ENCODE measurements at regions of chr12 and their contacts with region 1.

Region 1: GRCh38 chr12:71602745-71603577 is 60.7 kb downstream of the ZFC3H1 start:
- DNase-seq: no peak
- H3K4me3 ChIP-seq: no peak overlapping the region
- H3K27ac ChIP-seq: no peak overlapping the region
- H3K4me1 ChIP-seq: no peaks in the 10 kb centered on the region
- H3K27me3 ChIP-seq: no peaks in the 10 kb centered on the region
- CTCF ChIP-seq: no peak

Region 2: GRCh38 chr12:71645268-71645667 is 42.3 kb after region 1 on chr12:
- CTCF ChIA-PET with region 1: no interaction called
- dilution Hi-C with region 1: no loop called
- in situ Hi-C with region 1: no loop called
- intact Hi-C with region 1: loop called (anchors 5 kb)
- DNase-seq: no peak
- H3K4me3 ChIP-seq: no peak overlapping the region
- H3K27ac ChIP-seq: no peak overlapping the region
- H3K4me1 ChIP-seq: no peaks in the 10 kb centered on the region
- H3K27me3 ChIP-seq: no peaks in the 10 kb centered on the region
- CTCF ChIP-seq: no peak

Measured in mammary epithelial cell (primary cell).